ENCODE measurements at regions of chr2 and their contacts with region 1.

Region 1: DNA sequence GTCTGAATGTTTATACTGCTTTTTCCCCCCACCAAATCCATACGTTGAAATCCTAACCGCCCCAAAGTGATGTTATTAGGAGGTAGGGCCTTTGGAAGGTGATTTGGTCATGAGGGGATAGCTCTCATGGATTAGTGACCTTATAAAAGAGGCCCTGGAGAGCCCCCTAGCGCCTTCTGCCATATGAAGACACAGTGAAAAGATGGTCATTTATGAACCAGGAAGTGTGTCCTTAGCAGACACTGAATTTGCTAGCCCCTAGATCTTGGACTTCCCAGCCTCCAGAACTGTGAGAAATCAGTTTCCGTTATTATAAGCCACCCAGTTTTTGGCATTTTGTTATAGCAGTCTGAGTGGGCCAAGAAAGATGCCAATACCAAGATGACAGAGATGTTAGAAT is 7.2 kb upstream of the TSN start:
- DNase-seq: no peak
- ATAC-seq: no peak
- H3K4me3 ChIP-seq: no peak overlapping the region
- H3K4me3 Mint-ChIP-seq: no peak overlapping the region
- H3K27ac ChIP-seq: no peak overlapping the region
- H3K27ac Mint-ChIP-seq: no peak overlapping the region
- H3K4me1 ChIP-seq: peaks cover 0 to 2% of the 10 kb centered on the region in 2 experiments
- H3K4me1 Mint-ChIP-seq: no peaks in the 10 kb centered on the region
- H3K27me3 ChIP-seq: peaks cover 0 to 5% of the 10 kb centered on the region in 2 experiments
- H3K27me3 Mint-ChIP-seq: peaks cover 0 to 3% of the 10 kb centered on the region in 2 donors

Region 2: GRCh38 chr2:119782308-119783027 is 1965.7 kb before region 1 on chr2:
- CTCF ChIA-PET with region 1: no interaction called
- POLR2A ChIA-PET with region 1: no interaction called
- DNase-seq: no peak
- ATAC-seq: no peak
- H3K4me3 ChIP-seq: no peak overlapping the region
- H3K4me3 Mint-ChIP-seq: no peak overlapping the region
- H3K27ac ChIP-seq: no peak overlapping the region
- H3K27ac Mint-ChIP-seq: no peak overlapping the region
- H3K4me1 ChIP-seq: peaks cover 3 to 16% of the 10 kb centered on the region in 2 experiments
- H3K4me1 Mint-ChIP-seq: peaks cover 57 to 73% (median 68%) of the 10 kb centered on the region in 3 donors
- H3K27me3 ChIP-seq: no peaks in the 10 kb centered on the region
- H3K27me3 Mint-ChIP-seq: no peaks in the 10 kb centered on the region

Region 3: DNA sequence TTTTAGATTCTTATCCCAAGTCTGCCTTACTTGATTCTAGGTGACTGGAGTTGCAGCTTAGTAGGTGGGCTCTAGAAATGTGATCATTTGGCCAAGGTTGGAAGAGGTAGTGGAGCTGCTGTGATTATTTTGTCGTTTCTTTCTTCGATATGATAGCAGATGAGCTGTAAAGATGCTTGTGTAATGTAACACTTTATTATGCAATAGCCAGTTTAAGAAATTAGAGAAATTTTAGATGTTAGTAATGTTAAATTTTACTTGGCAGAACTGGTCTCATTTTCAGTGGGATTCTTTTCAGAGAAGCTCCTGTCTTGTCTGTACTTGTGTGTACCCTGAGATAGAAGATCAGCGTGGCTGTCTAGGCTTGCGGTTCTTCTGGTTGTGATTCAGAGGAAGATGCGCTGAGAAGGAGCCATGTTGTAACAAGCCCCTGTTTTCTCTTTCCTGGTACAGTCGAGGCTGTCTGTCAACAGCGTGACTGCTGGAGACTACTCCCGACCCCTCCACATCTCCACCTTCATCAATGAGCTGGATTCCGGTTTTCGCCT is 16.6 kb after region 1 on chr2:
- CTCF ChIA-PET with region 1: interaction called, 3 to 11 read pairs
- POLR2A ChIA-PET with region 1: interaction called in 1 of 2 experiments, 5 read pairs
- DNase-seq: no peak
- ATAC-seq: no peak
- H3K4me3 ChIP-seq: no peak overlapping the region
- H3K4me3 Mint-ChIP-seq: no peak overlapping the region
- H3K27ac ChIP-seq: no peak overlapping the region
- H3K27ac Mint-ChIP-seq: no peak overlapping the region
- H3K4me1 ChIP-seq: no peaks in the 10 kb centered on the region
- H3K4me1 Mint-ChIP-seq: peaks cover 0 to 3% (median 0%) of the 10 kb centered on the region in 3 donors
- H3K27me3 ChIP-seq: no peaks in the 10 kb centered on the region
- H3K27me3 Mint-ChIP-seq: no peaks in the 10 kb centered on the region

Region 4: DNA sequence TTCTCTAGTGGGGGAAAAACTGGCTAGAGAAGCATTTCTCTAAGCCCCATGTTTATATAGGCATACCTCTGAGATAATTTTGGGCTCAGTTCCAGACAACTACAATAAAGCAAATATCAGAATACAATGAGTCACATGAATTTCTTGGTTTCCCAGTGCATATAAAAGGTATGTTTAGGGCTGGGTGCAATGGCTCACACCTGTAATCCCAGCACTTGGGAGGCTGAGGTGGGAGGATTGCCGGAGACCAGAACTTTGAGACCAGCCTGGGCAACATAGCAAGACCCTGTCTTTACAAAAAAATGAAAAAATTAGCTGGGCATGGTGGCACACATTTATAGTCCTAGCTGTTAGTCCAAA is 29.5 kb after region 1 on chr2:
- CTCF ChIA-PET with region 1: no interaction called
- POLR2A ChIA-PET with region 1: no interaction called
- DNase-seq: no peak
- ATAC-seq: no peak
- H3K4me3 ChIP-seq: no peak overlapping the region
- H3K4me3 Mint-ChIP-seq: no peak overlapping the region
- H3K27ac ChIP-seq: no peak overlapping the region
- H3K27ac Mint-ChIP-seq: no peak overlapping the region
- H3K4me1 ChIP-seq: no peaks in the 10 kb centered on the region
- H3K4me1 Mint-ChIP-seq: no peaks in the 10 kb centered on the region
- H3K27me3 ChIP-seq: peaks cover 0 to 4% of the 10 kb centered on the region in 2 experiments
- H3K27me3 Mint-ChIP-seq: no peaks in the 10 kb centered on the region